ENCODE measurements at regions of chr12 and their contacts with region 1.

Region 1: DNA sequence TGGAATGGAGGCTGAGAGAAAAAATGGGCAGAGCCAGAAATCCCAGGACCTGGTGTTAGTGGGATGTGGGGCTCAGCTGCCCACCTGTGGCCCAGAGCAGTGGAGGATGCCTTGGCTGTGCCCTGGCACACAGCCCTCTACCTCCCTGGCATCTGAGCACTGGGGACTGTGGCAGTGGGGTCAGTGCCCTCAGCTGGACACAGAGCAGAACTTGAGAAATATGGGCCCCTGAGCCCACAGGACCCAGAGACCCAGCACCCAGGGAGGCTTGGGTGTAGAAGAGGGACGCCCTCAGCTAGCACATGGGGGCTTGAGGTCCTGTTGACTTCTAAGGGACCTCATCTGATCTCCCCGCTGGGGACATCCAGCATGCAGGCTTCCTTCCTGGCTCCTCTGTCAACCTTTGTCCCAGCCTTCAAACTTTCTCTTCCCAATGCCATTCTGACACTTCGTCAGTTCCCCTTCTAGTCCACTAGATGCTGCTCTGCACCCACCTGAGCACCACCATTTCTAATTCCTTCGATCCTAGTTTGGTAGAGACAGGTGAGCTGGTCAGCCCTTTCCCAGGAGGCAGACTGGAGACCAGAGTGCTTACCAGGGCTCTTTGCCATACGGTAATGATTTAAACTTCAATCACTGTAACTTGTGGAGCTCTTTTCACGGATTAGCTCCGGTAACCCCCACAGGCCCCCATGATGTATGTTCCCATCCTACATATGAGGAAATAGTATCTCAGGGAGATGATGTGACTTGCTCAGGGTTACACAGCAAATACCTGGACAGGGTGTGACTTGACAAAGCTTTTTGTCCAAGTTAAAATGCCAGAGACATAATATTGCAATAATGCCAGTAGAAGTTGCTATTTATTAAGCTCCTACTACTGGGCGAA is 143.7 kb downstream of the ASCL4 start:
- DNase-seq: peak; percentile 54
- ATAC-seq: peak; percentile 87 to 88
- H3K4me3 ChIP-seq: no peak overlapping the region
- H3K27ac ChIP-seq: no peak overlapping the region
- H3K4me1 ChIP-seq: no peaks in the 10 kb centered on the region
- CTCF ChIP-seq: peak; percentile 66
- EP300 ChIP-seq: no peak
- POLR2A ChIP-seq: no peak
- RAD21 ChIP-seq: peak; percentile 75 to 81

Region 2: GRCh38 chr12:107929436-107929835 is 11.3 kb after region 1 on chr12:
- CTCF ChIA-PET with region 1: interaction called, 44 read pairs
- POLR2A ChIA-PET with region 1: no interaction called
- DNase-seq: peak; percentile 35 to 80
- ATAC-seq: peak; percentile 83 to 97
- H3K4me3 ChIP-seq: no peak overlapping the region
- H3K27ac ChIP-seq: no peak overlapping the region
- H3K4me1 ChIP-seq: no peaks in the 10 kb centered on the region
- CTCF ChIP-seq: peak; percentile 41
- EP300 ChIP-seq: no peak
- POLR2A ChIP-seq: no peak
- RAD21 ChIP-seq: peak; percentile 35 to 54; a peak in 3 of 5 replicates

Region 3: DNA sequence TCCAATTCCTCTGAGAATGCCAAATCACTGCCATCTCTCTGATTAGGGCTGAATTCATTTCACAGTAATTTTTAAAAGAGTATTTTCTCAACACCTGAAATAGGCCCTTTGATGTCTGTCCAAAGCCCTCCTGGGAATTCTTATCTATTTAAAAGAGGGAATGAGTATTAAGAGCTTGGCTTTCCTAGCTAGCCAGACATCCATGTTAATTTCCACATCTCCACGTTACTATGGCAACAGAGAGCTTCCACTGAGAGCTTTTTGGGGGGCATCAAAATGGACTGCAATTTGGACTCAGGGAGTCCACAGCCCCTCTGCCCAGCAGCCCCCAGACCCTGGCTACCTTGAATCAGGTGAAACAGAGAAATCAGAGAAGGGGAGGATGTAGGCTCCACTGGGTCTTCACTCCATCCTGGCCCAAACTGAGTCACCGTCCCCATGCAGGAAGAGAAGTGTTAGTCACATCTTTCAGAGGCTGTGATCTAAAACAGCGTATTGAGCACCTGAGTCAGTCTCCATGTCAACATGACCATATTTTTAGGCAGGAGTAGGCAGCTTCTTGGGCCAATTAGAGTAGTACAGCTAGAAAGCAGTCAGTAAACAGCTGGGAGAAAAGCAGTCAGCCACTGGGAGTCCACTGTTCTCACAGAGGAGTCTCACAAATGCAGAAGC is 590.0 kb after region 1 on chr12:
- CTCF ChIA-PET with region 1: interaction called, 32 read pairs
- POLR2A ChIA-PET with region 1: no interaction called
- DNase-seq: no peak
- ATAC-seq: no peak
- H3K4me3 ChIP-seq: no peak overlapping the region
- H3K27ac ChIP-seq: no peak overlapping the region
- H3K4me1 ChIP-seq: no peaks in the 10 kb centered on the region
- CTCF ChIP-seq: no peak
- EP300 ChIP-seq: no peak
- POLR2A ChIP-seq: no peak
- RAD21 ChIP-seq: no peak